Esophagus muscularis mucosa (tissue), 4 donors: ENCODE measurements at regions of chr4 and their contacts with region 1.

Region 1: DNA sequence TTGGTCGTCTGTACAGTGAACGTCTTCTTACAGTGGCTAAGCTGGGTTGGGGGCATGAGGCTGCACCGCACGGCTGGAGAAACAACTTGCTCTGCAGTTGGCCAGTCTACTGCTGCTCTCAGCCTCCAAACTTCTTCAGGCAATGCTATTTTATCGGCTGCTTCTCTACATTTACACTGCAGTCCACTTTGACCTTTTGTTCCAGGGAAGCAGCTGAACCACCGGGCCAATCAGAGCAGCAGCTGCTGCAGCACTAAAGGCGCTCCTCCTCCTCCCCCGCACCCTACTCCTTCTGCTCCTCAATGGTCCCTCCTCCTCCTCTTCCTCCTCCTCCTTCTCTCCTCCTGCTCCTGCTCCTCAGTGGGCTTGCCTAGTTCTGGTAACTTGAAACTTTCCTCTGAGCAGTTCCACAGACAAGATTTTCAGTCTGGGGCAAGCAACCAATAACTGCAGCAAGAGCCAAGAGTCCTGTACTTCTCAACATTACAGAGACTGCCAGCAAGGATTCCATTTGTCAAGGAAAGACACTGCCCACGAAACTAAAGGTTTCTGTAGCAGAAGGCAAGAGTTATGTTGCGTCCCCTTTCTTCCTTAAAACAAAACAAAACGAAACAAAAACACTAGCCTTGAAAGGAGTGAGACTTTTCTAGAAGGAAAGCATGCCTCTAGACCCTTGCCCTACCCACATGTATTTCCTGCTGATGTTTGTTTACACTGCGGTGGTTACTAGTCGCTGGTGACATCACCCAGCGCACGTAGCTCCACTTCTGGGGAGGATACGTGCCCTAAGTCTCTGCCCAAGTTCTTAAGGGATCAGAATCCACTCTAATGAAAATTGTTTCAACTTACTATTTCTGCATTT is 125.7 kb upstream of the NAP1L5 start:
- DNase-seq: peak; percentile 94
- H3K4me3 ChIP-seq: peak overlapping the region; percentile 50 to 66 (median 58)
- H3K27ac ChIP-seq: peak overlapping the region; percentile 85 to 87 (median 86)
- H3K4me1 ChIP-seq: peaks cover 23 to 51% (median 48%) of the 10 kb centered on the region in 4 donors
- H3K27me3 ChIP-seq: no peaks in the 10 kb centered on the region
- CTCF ChIP-seq: no peak
- EP300 ChIP-seq: no peak
- POLR2A ChIP-seq: peak; percentile 49

Region 2: GRCh38 chr4:86825516-86825915 is 1997.8 kb before region 1 on chr4:
- intact Hi-C with region 1: no loop called
- DNase-seq: no peak
- H3K4me3 ChIP-seq: no peak overlapping the region
- H3K27ac ChIP-seq: no peak overlapping the region
- H3K4me1 ChIP-seq: no peaks in the 10 kb centered on the region
- H3K27me3 ChIP-seq: no peaks in the 10 kb centered on the region
- CTCF ChIP-seq: no peak
- EP300 ChIP-seq: no peak
- POLR2A ChIP-seq: no peak

Region 3: DNA sequence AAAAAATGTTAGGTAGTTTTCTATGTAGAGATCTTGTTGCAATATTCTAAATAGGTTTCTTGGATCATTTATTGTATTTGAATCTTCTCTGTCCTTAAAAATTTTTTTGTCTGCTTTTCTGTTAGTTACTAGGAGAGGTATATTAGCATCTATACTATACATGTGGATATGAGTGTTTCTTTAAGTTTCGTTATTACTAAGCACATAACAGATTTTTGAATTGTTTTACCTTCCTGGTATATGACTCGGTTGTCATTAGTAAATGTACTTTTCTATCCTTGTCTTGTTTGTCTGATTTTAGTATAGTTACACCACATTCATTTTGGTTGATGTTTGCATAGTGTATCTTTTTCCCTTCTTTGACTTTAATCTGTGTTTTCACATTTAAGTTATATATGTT is 319.9 kb before region 1 on chr4:
- intact Hi-C with region 1: no loop called
- DNase-seq: no peak
- H3K4me3 ChIP-seq: no peak overlapping the region
- H3K27ac ChIP-seq: no peak overlapping the region
- H3K4me1 ChIP-seq: no peaks in the 10 kb centered on the region
- H3K27me3 ChIP-seq: no peaks in the 10 kb centered on the region
- CTCF ChIP-seq: no peak
- EP300 ChIP-seq: no peak
- POLR2A ChIP-seq: no peak

Region 4: GRCh38 chr4:89024051-89024675 is 200.9 kb after region 1 on chr4:
- intact Hi-C with region 1: loop called (anchors 2 kb)
- DNase-seq: no peak
- H3K4me3 ChIP-seq: no peak overlapping the region
- H3K27ac ChIP-seq: no peak overlapping the region
- H3K4me1 ChIP-seq: peaks cover 0 to 8% (median 2%) of the 10 kb centered on the region in 4 donors
- H3K27me3 ChIP-seq: no peaks in the 10 kb centered on the region
- CTCF ChIP-seq: peak; percentile 84 to 91 (median 88)
- EP300 ChIP-seq: no peak
- POLR2A ChIP-seq: no peak